MCF 10A (cell line): ENCODE measurements at regions of chr2 and their contacts with region 1.

Region 1: DNA sequence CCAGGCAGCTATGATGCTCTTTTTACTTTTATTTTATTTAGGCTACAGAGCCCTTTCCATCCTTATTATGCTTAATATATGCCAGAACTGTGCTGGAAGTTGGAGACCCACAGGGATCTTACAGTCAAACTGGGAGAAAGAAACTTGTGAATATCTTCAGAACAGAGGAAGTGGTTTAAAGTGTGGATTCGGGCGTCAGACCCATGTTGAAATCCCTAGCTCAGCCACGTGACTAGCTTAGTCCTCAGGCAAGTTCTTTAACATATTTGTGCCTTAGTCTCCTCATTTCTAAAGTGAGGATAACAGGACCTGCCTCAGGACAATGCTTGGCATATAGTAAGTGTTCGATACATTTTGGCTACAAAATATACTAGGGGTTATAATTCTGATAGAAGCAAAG is 59.1 kb downstream of the MAP3K20 start:
- DNase-seq: peak; percentile 88
- H3K4me3 Mint-ChIP-seq: peak overlapping the region; percentile 74
- H3K27ac Mint-ChIP-seq: peak overlapping the region; percentile 92
- H3K4me1 Mint-ChIP-seq: peaks cover 63% of the 10 kb centered on the region
- H3K27me3 Mint-ChIP-seq: no peaks in the 10 kb centered on the region
- CTCF ChIP-seq: no peak

Region 2: GRCh38 chr2:173048897-173049661 is 85.6 kb before region 1 on chr2:
- CTCF ChIA-PET with region 1: no interaction called
- POLR2A ChIA-PET with region 1: interaction called, 18 read pairs
- intact Hi-C with region 1: no loop called
- DNase-seq: peak; percentile 98
- H3K4me3 Mint-ChIP-seq: peak overlapping the region; percentile 62
- H3K27ac Mint-ChIP-seq: peak overlapping the region; percentile 98
- H3K4me1 Mint-ChIP-seq: peaks cover 32% of the 10 kb centered on the region
- H3K27me3 Mint-ChIP-seq: no peaks in the 10 kb centered on the region
- CTCF ChIP-seq: no peak

Region 3: GRCh38 chr2:173075781-173076580 is 58.7 kb before region 1 on chr2 and contains the start of gene MAP3K20:
- CTCF ChIA-PET with region 1: interaction called, 4 read pairs
- POLR2A ChIA-PET with region 1: interaction called, 188 read pairs
- intact Hi-C with region 1: loop called (anchors 2 kb)
- DNase-seq: peak; percentile 72
- H3K4me3 Mint-ChIP-seq: peak within 1 kb of the TSS; percentile 82
- H3K27ac Mint-ChIP-seq: peak within 1 kb of the TSS; percentile 95
- H3K4me1 Mint-ChIP-seq: peaks cover 31% of the 10 kb centered on the region
- H3K27me3 Mint-ChIP-seq: no peaks in the 10 kb centered on the region
- CTCF ChIP-seq: peak; percentile 40
- total RNA-seq, gene MAP3K20: 134 and 150 TPM in 2 replicates

Region 4: DNA sequence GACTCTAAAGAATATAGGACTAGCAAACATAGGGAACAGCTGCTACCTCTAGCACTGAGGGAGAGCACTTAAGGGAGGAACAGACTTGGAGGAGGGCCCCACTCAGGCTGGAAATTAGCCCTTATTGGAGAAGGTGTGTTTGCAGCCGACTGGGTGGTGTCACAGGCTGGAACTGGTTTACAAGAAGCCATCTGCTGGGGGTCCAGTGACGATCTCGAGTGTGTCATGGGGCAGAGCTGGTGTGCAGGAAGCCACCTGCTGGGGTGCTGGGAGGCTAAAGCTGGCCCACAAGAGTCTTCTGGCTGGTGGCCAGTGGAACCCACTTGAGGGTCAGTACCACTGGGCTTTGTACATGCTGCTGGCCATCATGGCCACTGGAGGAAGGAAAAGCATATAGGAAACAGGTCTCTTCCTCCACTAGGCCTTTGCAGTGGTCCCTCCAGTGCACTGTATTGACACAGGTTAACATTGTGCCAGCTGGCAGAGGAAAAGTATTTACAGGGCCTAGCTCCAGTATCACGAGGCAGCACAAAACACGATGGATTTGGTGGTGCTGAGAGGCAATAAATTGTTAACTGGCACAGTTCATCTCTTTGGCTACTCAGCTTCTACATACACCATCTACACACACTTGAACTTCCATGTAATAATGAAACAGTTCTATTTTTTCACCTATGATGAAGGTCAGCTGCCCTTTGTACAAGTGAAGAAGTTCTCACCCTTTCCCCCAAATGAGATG is 15.5 kb before region 1 on chr2:
- CTCF ChIA-PET with region 1: interaction called, 5 read pairs
- POLR2A ChIA-PET with region 1: interaction called, 110 read pairs
- intact Hi-C with region 1: loop called (anchors 2 kb)
- DNase-seq: peak; percentile 36
- H3K4me3 Mint-ChIP-seq: no peak overlapping the region
- H3K27ac Mint-ChIP-seq: peak overlapping the region; percentile 96
- H3K4me1 Mint-ChIP-seq: peaks cover 50% of the 10 kb centered on the region
- H3K27me3 Mint-ChIP-seq: no peaks in the 10 kb centered on the region
- CTCF ChIP-seq: no peak

Region 5: GRCh38 chr2:173146590-173146989 is 11.9 kb after region 1 on chr2:
- CTCF ChIA-PET with region 1: interaction called, 3 read pairs
- POLR2A ChIA-PET with region 1: interaction called, 212 read pairs
- intact Hi-C with region 1: no loop called
- DNase-seq: no peak
- H3K4me3 Mint-ChIP-seq: no peak overlapping the region
- H3K27ac Mint-ChIP-seq: peak overlapping the region; percentile 91
- H3K4me1 Mint-ChIP-seq: peaks cover 31% of the 10 kb centered on the region
- H3K27me3 Mint-ChIP-seq: no peaks in the 10 kb centered on the region
- CTCF ChIP-seq: no peak

Region 6: DNA sequence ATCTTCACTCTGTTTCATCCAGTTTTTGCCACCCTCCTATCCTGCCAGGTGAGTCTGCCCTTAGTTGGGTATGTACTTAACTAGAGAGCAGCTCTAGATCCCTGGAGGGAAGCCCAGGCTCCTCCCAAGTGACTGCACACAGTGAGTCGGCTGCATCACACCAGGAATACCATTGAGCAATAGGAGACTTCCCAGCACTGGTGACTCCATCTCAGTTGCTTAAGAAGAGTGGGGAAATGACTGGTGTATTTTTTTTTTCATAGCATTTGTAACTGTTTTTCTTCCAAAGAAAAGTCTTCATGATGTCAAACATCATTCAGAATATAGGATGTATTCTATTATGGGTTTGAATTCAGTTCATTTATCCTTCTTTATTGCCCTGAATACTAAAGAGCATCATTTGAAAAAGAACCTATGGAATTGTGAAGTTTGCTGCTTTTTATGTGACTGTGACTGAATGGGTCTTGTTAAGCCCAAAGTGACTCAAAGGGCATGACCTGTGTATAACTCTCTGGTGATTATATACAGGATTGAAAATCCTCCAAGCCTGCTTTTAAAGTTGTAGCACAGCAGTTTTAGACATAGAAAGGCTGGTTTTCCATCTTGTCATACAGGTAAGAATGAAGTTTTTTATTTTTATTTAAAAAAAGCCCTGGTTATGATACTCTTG is 25.2 kb after region 1 on chr2:
- CTCF ChIA-PET with region 1: interaction called, 6 read pairs
- POLR2A ChIA-PET with region 1: interaction called, 134 read pairs
- intact Hi-C with region 1: no loop called
- DNase-seq: peak; percentile 100
- H3K4me3 Mint-ChIP-seq: peak overlapping the region; percentile 68
- H3K27ac Mint-ChIP-seq: peak overlapping the region; percentile 93
- H3K4me1 Mint-ChIP-seq: peaks cover 46% of the 10 kb centered on the region
- H3K27me3 Mint-ChIP-seq: no peaks in the 10 kb centered on the region
- CTCF ChIP-seq: no peak

Region 7: GRCh38 chr2:173210270-173211196 is 75.8 kb after region 1 on chr2:
- CTCF ChIA-PET with region 1: interaction called, 41 read pairs
- POLR2A ChIA-PET with region 1: interaction called, 37 read pairs
- intact Hi-C with region 1: loop called (anchors 1 kb)
- DNase-seq: peak; percentile 94
- H3K4me3 Mint-ChIP-seq: no peak overlapping the region
- H3K27ac Mint-ChIP-seq: peak overlapping the region; percentile 93
- H3K4me1 Mint-ChIP-seq: peaks cover 9% of the 10 kb centered on the region
- H3K27me3 Mint-ChIP-seq: no peaks in the 10 kb centered on the region
- CTCF ChIP-seq: peak; percentile 84